GM10248 (cell line): ENCODE measurements at regions of chr9 and their contacts with region 1.

Region 1: DNA sequence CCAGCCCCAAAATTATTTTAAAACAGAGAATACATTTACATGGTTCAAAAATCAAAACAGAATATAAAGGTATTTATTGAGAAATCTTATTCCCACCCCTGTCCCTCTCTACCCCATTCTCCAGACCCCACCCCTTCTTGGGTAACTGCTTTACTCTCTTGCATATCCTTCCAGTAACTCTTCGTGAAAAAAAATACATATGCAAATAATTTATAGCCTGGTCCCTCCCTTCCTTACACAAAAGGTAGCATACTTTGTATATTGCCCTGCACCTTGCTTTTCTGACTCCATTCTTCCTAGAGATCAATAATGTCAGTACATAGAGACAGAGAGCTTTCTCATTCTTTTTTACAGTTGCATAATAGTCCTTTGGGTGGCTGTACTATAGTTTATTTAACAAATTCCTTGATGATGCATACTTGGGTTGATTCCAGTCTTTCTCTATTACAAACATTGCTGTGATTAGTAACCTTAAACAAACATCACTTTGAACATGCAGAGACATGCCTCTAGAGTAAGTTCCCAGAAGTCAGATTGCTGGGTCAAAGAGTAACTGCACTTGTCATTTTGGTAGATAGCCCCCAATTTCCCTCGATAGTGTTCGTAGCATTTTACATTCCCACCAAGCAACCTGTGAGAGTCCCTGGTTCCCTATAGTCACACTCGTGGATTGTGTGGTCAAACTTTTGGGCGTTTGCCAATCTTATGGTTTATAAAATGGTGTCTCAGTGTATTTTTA is 47.8 kb downstream of the STOM start:
- DNase-seq: no peak
- CTCF ChIP-seq: no peak

Region 2: DNA sequence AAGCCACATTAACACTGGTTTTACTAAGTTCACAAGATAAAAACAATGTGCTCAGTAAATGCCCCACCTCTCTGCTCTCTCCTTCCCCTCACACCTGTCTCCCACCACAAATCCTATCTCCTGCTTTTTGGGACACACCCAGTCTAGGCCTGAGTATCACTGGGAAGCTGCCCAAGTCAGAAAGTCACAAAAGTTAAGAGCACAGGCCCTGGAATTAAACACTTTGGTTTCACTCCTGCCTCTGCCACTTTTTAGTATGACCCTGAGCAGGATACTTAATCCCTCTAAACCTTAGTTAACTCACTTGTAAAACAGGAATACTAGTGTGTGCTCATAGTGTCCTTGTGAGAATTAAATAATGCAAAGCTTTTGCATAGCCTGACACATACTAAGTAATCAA is 283.4 kb before region 1 on chr9:
- CTCF ChIA-PET with region 1: no interaction called
- POLR2A ChIA-PET with region 1: no interaction called
- DNase-seq: no peak
- CTCF ChIP-seq: no peak

Region 3: DNA sequence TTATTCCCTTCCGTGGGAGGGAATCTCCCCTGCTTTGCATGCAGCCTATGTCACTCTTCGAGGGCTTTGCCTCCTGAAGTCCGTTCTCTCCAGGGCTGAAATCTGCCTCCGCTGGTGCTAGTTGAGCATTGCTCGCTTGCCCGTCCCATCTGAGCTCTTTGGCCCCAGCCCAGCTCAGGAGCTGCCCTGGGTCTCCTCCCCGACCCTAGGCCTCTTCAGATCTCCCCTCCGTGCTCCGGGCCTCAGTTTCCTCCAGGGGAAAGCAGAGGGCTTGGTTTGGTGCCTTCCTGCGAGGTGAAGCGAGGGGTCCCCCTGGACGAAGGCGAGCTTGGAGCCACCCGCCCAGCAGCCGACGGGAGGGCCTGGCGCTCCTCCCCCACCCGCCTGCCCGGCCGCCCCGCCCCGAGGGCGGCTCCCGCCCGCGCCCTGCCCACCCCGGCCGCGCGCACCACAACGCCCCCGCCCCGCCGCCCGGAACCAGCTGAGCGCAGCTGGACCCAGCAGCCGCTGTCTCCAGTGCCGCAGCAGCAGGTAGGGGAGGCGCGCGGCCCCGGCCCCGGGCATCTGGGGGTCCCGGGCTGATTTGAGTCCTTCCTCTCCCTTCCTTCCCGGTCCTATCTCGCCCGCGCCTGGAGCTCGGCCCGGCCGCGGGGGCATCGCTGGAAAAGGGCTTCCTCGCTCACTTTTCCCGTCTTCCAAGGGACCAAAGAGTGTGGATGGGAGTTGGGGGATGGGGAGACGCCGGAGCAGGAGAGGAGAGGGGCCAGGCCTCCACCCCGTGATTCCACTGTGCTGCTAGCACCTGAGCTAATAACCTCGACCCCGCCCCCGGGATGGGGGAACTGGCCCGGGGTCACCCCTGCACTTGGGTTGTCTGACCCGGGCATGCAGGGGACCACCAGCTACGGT is 54.3 kb before region 1 on chr9 and contains the start of gene GSN:
- CTCF ChIA-PET with region 1: interaction called, 22 read pairs
- POLR2A ChIA-PET with region 1: no interaction called
- DNase-seq: peak; percentile 87
- CTCF ChIP-seq: no peak

Region 4: GRCh38 chr9:121299467-121300234 is 22.6 kb before region 1 on chr9:
- CTCF ChIA-PET with region 1: interaction called, 31 read pairs
- POLR2A ChIA-PET with region 1: no interaction called
- DNase-seq: peak; percentile 56
- CTCF ChIP-seq: no peak

Region 5: GRCh38 chr9:121350993-121351561 is 28.9 kb after region 1 on chr9:
- CTCF ChIA-PET with region 1: interaction called, 31 read pairs
- POLR2A ChIA-PET with region 1: no interaction called
- DNase-seq: no peak
- CTCF ChIP-seq: no peak

Region 6: GRCh38 chr9:121376214-121376830 is 54.1 kb after region 1 on chr9:
- CTCF ChIA-PET with region 1: interaction called, 66 read pairs
- POLR2A ChIA-PET with region 1: no interaction called
- DNase-seq: no peak
- CTCF ChIP-seq: no peak

Region 7: DNA sequence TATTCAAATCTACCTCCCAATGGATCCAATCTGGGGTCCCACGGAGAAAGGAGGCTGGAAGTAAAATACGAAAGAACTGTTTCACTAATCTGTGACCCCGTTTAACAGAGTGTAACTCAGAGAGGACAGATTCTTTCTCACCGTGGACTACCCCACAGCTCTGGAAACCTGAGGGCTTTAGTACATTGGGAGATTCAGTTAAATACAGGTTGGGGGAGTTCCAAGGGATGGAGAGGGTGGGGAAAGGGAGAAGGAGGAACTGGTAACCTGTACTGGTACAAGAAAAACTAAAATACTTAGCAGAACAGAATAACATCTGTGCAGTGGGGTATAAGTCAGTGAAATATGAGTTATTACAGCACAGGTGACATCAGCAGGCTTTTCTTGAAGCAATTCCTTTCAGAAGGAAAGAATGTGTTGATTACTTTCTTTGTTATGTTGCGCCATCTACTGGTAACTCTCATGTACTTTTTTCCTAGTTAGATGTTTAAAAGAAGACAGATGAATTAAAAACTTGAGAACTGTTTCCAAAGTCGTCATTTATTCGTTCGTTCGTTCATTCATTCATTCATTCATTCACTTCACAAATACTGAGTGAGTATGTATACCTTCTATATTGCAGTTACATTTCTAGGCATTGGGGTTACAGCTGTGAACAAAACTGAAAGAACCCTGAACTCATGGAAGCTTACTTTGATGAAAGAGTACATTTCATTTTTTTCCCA is 77.8 kb after region 1 on chr9:
- CTCF ChIA-PET with region 1: interaction called, 294 read pairs
- POLR2A ChIA-PET with region 1: no interaction called
- DNase-seq: peak; percentile 26
- CTCF ChIP-seq: peak; percentile 43

Region 8: GRCh38 chr9:121424024-121424432 is 101.8 kb after region 1 on chr9:
- CTCF ChIA-PET with region 1: no interaction called
- POLR2A ChIA-PET with region 1: no interaction called
- DNase-seq: no peak
- CTCF ChIP-seq: no peak